ENCODE measurements at regions of chr16 and their contacts with region 1.

Region 1: DNA sequence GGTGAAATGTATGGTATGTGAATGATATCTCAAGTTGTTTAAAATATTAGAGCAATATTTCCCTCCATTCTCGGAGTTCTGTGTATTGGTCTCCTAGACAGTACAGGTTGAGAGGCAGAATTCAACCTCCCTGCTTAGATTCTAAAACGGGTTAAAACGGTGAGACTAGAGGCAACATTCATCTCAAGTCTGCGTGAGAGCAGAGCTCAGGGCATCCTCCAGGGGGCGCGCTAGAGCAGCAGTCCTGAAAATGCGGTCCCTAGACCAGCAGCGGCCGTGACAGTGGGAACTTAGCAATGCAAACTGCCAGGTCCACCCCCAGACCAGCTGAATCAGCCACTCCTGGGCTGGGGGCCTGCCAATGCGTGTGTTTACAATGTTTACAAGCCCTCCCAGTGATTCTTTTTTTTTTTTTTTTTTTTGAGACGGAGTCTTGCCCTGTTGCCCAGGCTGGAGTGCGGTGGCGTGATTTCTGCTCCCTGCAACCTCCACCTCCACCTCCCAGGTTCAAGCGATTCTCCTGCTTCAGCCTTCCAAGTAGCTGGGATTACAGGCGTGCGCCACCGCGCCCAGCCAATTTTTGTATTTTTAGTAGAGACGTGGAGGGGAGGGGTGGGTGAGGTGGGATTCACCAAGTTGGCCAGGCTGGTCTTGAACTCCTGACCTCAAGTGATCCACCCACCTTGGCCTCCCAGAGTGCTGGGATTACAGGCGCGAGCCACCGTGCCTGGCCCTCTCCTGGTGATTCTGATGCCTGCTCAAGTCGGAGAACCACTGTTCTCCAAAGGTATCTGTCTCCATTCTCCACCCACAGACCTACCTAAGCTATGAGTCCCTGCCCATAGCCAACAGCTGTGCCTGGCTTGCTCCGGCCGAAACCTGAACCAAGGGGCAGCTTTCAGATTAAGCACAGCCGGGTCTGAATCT is 24.2 kb downstream of the KLHL36 start:
- DNase-seq: peak; percentile 90
- H3K4me3 Mint-ChIP-seq: no peak overlapping the region
- H3K27ac Mint-ChIP-seq: no peak overlapping the region
- H3K4me1 Mint-ChIP-seq: peaks cover 7% of the 10 kb centered on the region
- H3K27me3 Mint-ChIP-seq: no peaks in the 10 kb centered on the region

Region 2: DNA sequence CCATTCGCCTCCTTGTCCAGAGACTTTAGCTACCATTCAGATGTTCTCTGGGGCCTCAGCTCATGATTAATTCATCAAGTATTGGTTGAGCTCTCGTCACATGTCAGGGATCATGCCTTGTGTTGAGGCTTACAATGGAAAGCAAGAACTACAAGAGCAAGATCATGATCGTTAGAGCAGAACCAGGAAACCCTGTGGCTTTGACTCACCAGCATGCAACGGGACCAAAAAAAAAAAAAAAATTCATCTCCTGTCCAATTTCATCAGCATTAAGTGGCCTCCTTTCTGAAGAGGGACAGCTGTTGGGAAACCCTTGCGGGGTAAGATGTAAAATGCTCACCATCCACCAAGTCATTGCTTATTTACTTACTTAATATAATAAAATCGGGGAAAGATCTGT is 15.2 kb after region 1 on chr16:
- CTCF ChIA-PET with region 1: interaction called, 15 read pairs
- intact Hi-C with region 1: no loop called
- DNase-seq: peak; percentile 9
- H3K4me3 Mint-ChIP-seq: no peak overlapping the region
- H3K27ac Mint-ChIP-seq: no peak overlapping the region
- H3K4me1 Mint-ChIP-seq: peaks cover 4% of the 10 kb centered on the region
- H3K27me3 Mint-ChIP-seq: no peaks in the 10 kb centered on the region

Region 3: GRCh38 chr16:84699712-84700445 is 27.3 kb after region 1 on chr16 and contains the start of gene USP10:
- CTCF ChIA-PET with region 1: interaction called, 13 read pairs
- intact Hi-C with region 1: loop called (anchors 2 kb)
- DNase-seq: peak; percentile 80
- H3K4me3 Mint-ChIP-seq: peak within 1 kb of the TSS; percentile 95
- H3K27ac Mint-ChIP-seq: peak within 1 kb of the TSS; percentile 95
- H3K4me1 Mint-ChIP-seq: peaks cover 31% of the 10 kb centered on the region
- H3K27me3 Mint-ChIP-seq: no peaks in the 10 kb centered on the region
- total RNA-seq, gene USP10: 93.9 to 95.2 TPM

Region 4: GRCh38 chr16:84720177-84720579 is 47.6 kb after region 1 on chr16:
- CTCF ChIA-PET with region 1: interaction called, 47 read pairs
- intact Hi-C with region 1: no loop called
- DNase-seq: no peak
- H3K4me3 Mint-ChIP-seq: no peak overlapping the region
- H3K27ac Mint-ChIP-seq: no peak overlapping the region
- H3K4me1 Mint-ChIP-seq: peaks cover 76% of the 10 kb centered on the region
- H3K27me3 Mint-ChIP-seq: no peaks in the 10 kb centered on the region

Region 5: DNA sequence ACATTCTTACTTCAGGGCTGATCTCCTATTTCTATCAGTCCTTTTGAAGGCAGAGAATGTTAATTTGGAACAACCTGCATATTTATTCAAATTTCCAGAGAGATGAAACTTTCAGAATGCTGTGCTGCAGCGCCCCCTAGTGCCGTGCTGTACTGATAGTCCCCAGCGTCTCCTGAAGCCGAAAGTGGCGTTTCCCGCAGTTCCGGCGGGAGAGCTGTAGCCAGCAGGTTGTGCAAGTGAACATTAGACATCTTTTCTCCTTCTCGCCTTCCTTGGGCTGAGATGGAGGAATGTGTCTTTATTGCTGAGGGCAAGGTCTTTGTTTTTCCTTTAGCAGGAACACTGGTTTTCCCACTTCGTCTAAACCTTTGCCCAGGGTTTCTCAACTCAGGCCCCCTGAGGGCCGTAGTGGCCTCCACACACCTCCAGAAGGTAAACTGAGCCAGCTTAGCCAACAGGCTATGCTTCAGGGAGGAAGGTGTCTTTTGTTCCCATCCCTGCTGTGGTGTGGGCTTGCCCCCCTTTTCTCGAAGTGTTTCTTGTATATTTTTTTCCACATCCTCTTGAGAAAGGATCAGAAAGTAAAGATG is 53.6 kb after region 1 on chr16:
- CTCF ChIA-PET with region 1: interaction called, 47 read pairs
- intact Hi-C with region 1: loop called (anchors 1 kb)
- DNase-seq: peak; percentile 91
- H3K4me3 Mint-ChIP-seq: no peak overlapping the region
- H3K27ac Mint-ChIP-seq: no peak overlapping the region
- H3K4me1 Mint-ChIP-seq: peaks cover 74% of the 10 kb centered on the region
- H3K27me3 Mint-ChIP-seq: no peaks in the 10 kb centered on the region

Region 6: DNA sequence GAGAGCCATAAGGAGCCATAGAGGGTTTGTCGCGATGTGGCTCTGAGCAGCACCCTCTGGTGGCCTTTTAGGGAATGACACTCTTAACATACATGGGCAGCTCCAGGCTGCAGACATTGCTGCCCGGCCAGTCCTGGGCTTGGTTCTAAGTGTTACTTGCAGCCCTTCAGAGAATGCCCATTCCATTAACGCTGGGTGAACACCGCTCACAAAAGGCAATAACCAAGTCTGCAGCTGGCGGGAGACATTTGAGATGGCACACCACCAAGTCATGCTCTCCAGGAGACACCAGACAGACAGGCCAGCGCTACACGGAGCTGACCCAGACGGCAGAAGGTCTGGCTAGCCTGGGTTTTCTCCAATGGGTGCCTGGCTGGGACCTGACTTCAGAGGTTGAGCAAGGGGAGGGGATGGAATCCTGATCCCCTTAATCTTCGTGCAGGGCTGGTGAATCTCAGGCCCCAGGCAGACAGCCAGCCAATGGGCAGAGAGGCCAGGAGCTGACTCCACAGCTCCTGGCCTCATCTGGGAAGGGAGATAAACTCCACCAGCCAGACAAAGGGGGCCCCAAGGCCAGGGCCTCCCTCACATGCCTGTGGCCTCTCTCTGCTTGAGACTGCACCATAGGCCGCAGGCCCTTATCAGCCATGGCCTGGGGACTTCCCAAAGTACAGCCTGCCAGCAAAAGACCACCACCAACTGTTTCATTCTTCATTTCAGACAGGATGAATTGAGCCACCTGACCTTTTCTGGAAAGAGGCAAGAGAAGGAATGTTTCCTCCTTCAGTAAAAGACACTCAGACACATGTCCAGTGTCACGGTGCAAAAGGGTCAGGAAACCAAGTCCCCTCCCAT is 280.0 kb after region 1 on chr16:
- CTCF ChIA-PET with region 1: no interaction called
- intact Hi-C with region 1: loop called (anchors 10 kb)
- DNase-seq: peak; percentile 83
- H3K4me3 Mint-ChIP-seq: no peak overlapping the region
- H3K27ac Mint-ChIP-seq: no peak overlapping the region
- H3K4me1 Mint-ChIP-seq: no peaks in the 10 kb centered on the region
- H3K27me3 Mint-ChIP-seq: no peaks in the 10 kb centered on the region

Region 7: DNA sequence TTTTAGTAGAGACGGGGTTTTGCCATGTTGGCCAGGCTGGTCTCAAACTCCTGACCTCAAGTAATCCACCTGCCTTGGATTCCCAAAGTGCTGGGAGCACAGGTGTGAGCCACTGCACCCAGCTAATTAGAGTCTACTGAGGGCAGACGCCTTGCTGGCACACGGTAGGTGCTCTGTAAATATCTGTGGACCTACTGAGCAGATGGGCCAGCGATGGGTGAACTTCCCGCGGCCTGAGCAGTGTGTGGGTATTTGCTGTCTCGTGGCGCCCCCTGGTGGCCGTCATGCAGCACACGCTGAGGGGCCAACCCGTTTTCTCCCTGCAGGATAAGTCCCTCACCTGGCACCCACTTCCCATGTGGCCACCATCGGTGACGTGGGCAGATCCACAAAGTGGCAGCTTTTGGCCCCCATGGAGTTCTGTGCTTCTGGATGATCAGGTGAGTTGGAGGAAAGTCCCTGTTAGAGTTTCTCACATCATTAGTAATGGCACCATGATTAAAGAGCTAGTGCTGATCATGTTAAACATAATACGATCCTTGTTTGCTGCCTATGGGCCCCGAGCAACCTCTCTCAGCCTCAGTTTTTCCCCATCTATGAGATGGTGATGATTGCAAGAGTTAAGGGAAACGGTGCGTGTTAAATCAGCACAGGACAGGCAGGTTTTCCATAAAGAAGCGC is 298.0 kb after region 1 on chr16:
- CTCF ChIA-PET with region 1: interaction called, 4 read pairs
- intact Hi-C with region 1: loop called (anchors 2 kb)
- DNase-seq: peak; percentile 86
- H3K4me3 Mint-ChIP-seq: no peak overlapping the region
- H3K27ac Mint-ChIP-seq: no peak overlapping the region
- H3K4me1 Mint-ChIP-seq: peaks cover 5% of the 10 kb centered on the region
- H3K27me3 Mint-ChIP-seq: no peaks in the 10 kb centered on the region

Measured in activated naive CD4-positive, alpha-beta T cell treated with anti-CD3 and anti-CD28 coated beads for 36 hours (primary cell).